CD4-positive, alpha-beta T cell (primary cell): ENCODE measurements at regions of chr10 and their contacts with region 1.

Region 1: DNA sequence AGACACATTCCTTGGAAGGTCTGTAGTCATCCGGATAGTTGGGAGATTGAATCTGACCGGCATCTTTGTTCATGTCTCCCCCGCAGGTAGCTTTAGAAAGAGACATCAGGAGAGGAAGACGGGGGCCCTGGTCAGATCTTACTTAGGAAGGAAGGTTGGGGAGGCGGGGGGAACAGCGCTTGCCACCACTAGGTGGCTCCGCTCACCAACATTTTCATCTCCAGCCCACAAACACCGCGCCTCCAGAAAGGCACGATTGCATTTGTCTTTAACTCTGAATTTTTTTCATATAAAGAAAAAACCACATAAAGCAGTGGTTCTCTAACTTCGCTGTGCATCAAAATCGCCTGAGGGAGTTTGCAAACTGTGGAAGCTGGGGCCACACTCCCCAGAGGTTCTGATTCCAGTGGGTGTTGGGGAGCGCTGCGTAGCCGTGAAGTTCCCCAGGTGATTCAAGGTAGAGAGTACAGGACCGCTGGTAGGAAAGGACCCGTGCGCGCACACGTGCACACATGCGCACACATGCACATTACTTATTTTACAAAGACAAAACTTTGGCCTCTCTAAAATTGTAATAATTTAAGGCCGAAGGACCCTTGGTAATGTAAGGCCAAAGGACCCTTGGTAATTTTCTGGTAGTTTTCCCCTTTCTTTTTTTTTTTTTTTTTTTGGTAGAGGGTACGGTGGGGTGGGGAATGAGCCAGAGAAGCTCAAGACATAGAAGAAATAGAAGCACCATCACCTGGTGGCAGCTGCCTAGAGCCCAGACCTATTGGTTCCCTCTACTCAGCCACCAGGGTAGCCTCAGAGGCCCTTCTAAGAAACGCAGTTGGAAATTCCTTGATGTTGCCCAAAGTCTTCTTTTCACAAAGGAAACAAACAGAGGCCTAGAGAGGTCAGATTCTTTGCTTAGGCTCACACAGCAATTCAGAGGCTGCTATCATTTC is 37.4 kb upstream of the OPALIN start:
- DNase-seq: peak; percentile 39 to 79 (median 46)
- ATAC-seq: peak; percentile 89
- H3K4me3 ChIP-seq: no peak overlapping the region
- H3K4me3 Mint-ChIP-seq: peak overlapping the region; percentile 60
- H3K27ac ChIP-seq: no peak overlapping the region
- H3K27ac Mint-ChIP-seq: no peak overlapping the region
- H3K4me1 ChIP-seq: peaks cover 6% of the 10 kb centered on the region
- H3K4me1 Mint-ChIP-seq: peaks cover 6% of the 10 kb centered on the region
- H3K27me3 ChIP-seq: peaks cover 13 to 14% of the 10 kb centered on the region in 2 experiments
- H3K27me3 Mint-ChIP-seq: peaks cover 31% of the 10 kb centered on the region
- CTCF ChIP-seq: peak; percentile 96

Region 2: GRCh38 chr10:96513698-96514561 is 117.7 kb after region 1 on chr10 and contains the start of gene TLL2:
- CTCF ChIA-PET with region 1: no interaction called
- POLR2A ChIA-PET with region 1: no interaction called
- intact Hi-C with region 1: loop called (anchors 5 to 10 kb)
- DNase-seq: peak in 13 of 14 experiments; percentile 16 to 75 (median 35)
- ATAC-seq: peak; percentile 61
- H3K4me3 ChIP-seq: peak within 1 kb of the TSS; percentile 52
- H3K4me3 Mint-ChIP-seq: peak within 1 kb of the TSS; percentile 84
- H3K27ac ChIP-seq: no peak within 1 kb of the TSS
- H3K27ac Mint-ChIP-seq: no peak within 1 kb of the TSS
- H3K4me1 ChIP-seq: peaks cover 23% of the 10 kb centered on the region
- H3K4me1 Mint-ChIP-seq: peaks cover 10% of the 10 kb centered on the region
- H3K27me3 ChIP-seq: peaks cover 32 to 33% of the 10 kb centered on the region in 2 experiments
- H3K27me3 Mint-ChIP-seq: peaks cover 44% of the 10 kb centered on the region
- CTCF ChIP-seq: no peak
- total RNA-seq, gene TLL2: not detected

Region 3: DNA sequence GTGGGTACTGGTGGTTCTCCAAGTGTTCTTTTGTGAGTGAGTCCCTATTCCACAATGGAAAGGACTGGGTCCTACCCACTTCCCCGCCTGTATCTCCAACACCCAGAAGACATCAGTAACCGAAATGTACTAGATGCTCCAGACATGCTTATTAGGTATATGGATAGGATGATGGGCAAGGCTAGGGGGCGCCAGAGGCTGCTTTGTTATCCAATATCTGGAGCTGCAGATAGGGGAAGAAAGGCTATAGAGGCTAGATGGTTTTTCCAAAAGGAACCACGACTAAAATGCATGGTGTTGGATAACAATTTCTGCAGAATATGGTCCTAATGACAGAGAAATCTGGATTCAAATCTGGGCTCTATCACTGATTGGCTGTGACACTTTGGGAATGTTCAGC is 246.8 kb after region 1 on chr10:
- CTCF ChIA-PET with region 1: interaction called, 6 read pairs
- POLR2A ChIA-PET with region 1: no interaction called
- intact Hi-C with region 1: loop called in 1 of 2 experiments (anchors 5 kb)
- DNase-seq: peak in 9 of 14 experiments; percentile 15 to 63 (median 24)
- ATAC-seq: no peak
- H3K4me3 ChIP-seq: no peak overlapping the region
- H3K4me3 Mint-ChIP-seq: no peak overlapping the region
- H3K27ac ChIP-seq: no peak overlapping the region
- H3K27ac Mint-ChIP-seq: no peak overlapping the region
- H3K4me1 ChIP-seq: peaks cover 14% of the 10 kb centered on the region
- H3K4me1 Mint-ChIP-seq: no peaks in the 10 kb centered on the region
- H3K27me3 ChIP-seq: no peaks in the 10 kb centered on the region
- H3K27me3 Mint-ChIP-seq: no peaks in the 10 kb centered on the region
- CTCF ChIP-seq: no peak

Region 4: DNA sequence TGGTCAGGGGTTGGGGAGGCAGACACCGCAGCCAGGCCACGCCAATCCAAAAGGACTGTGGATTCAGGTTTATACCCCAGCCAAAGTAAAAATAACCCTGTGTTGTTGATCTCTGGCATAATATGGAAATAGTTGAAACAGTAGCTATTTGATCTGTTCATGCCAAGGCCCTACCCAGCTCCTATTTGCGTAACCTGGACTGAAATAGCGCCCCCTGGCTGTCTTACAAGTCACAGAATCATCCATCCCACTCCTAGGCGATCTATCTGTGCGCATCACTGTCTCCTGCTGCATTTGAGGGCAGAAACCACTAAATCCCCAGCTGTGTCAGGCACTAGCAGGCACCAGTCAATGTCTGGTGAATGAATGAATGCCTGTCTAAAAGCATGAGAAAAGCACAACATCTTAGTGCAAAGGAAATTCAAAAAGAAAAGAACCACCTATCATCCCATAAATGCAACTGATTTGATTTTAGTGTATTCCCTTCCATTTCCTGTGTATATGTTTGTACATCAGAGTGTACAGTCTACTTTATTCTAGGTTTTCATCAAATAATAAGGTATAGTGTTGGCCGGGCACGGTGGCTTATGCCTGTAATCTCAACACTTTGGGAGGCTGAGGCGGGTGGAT is 629.5 kb after region 1 on chr10:
- CTCF ChIA-PET with region 1: no interaction called
- POLR2A ChIA-PET with region 1: no interaction called
- intact Hi-C with region 1: loop called in 1 of 2 experiments (anchors 2 kb)
- DNase-seq: peak in 13 of 14 experiments; percentile 12 to 72 (median 32)
- ATAC-seq: no peak
- H3K4me3 ChIP-seq: no peak overlapping the region
- H3K4me3 Mint-ChIP-seq: no peak overlapping the region
- H3K27ac ChIP-seq: no peak overlapping the region
- H3K27ac Mint-ChIP-seq: no peak overlapping the region
- H3K4me1 ChIP-seq: no peaks in the 10 kb centered on the region
- H3K4me1 Mint-ChIP-seq: no peaks in the 10 kb centered on the region
- H3K27me3 ChIP-seq: no peaks in the 10 kb centered on the region
- H3K27me3 Mint-ChIP-seq: no peaks in the 10 kb centered on the region
- CTCF ChIP-seq: peak; percentile 68